A549 (cell line): ENCODE measurements at regions of chr14 and their contacts with region 1.

Region 1: DNA sequence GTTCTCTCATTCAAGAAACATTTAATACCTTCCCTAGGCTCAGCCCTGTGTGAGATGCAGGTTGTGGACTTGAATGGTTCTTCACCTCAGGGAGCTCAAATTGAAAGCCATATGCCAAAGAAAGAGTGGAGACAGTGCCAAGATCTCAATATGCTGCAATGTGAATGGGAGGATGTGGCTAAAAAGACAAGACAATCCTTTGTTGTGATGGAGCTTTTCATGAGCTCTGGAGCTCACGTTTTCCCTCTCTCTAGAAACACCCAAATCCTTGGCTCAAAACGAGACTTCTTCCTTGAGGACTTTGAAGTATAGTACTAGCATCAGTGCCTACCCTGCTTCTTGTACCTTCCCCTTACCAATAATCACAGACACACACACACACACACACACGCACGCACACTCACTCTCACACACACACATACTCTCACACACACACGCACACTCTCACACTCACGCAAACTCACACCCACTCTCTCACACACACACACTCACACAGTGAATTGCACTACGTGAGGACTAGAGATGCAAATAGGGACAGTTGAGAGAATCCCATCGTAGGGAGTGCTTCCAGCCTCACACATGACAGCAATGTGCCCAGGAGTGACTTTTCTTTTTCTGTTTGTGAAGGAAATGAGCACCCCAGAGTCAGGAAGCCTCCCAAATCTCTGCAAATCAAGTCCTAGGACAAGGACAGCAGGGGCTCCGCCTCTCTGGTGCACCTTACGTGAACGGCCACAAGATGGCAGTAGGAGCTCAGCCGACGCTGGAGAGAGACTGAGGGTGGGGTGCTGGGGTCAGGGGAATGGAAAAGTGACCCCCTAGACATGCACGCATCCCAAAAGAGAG is 231.4 kb downstream of the PCNX1 start:
- DNase-seq: peak; percentile 53 to 61
- ATAC-seq: peak; percentile 89 to 95
- H3K4me3 ChIP-seq: no peak overlapping the region
- H3K27ac ChIP-seq: no peak overlapping the region
- H3K4me1 ChIP-seq: peaks cover 7% of the 10 kb centered on the region; the same call in 2 of the 3 replicates
- CTCF ChIP-seq: peak; percentile 91
- EP300 ChIP-seq: no peak
- POLR2A ChIP-seq: no peak
- RAD21 ChIP-seq: peak; percentile 95

Region 2: DNA sequence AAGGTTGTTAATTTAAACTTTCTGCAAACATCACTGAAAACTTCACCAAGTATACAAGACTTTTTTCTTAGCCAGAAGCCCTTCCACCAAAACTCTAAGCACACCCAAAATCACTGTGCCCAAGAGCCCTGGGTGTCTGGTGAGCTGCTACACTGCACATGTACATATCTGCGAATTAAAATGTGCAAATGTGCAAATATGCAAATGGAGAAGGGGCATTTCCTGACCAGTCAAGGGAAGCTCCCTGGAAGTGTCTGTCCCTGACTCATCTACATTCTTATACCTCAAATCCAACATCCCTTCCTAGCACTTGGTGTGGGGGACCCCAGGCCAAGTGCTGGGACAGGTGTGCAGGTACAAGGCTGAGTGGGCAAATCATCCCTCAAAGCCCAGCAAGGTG is 107.7 kb before region 1 on chr14:
- CTCF ChIA-PET with region 1: no interaction called
- POLR2A ChIA-PET with region 1: no interaction called
- DNase-seq: no peak
- ATAC-seq: no peak
- H3K4me3 ChIP-seq: no peak overlapping the region
- H3K27ac ChIP-seq: no peak overlapping the region
- H3K4me1 ChIP-seq: no peaks in the 10 kb centered on the region
- CTCF ChIP-seq: no peak
- EP300 ChIP-seq: no peak
- POLR2A ChIP-seq: no peak
- RAD21 ChIP-seq: no peak

Region 3: DNA sequence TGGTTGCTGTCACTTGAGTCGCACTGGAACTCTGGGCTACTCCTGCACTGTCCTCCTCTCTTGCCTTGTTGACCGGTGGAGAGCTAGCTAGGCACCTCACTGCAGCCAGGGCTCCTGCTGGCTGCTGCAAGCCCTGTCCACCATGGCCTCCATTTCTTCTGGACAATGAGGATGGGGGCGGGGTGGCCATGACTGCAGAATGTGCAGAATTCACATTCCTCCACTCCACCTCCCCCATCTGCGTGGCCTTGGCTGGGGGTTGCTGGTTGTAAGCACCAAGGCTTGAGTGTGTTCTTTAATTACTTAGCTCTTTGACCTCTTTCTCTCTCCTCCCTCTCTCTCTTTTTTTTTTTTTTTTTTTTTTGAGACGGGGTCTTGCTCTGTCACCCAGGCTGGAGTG is 17.1 kb after region 1 on chr14:
- CTCF ChIA-PET with region 1: interaction called, 14 read pairs
- POLR2A ChIA-PET with region 1: no interaction called
- DNase-seq: no peak
- ATAC-seq: no peak; a peak in 1 of 6 replicates
- H3K4me3 ChIP-seq: no peak overlapping the region
- H3K27ac ChIP-seq: no peak overlapping the region
- H3K4me1 ChIP-seq: no peaks in the 10 kb centered on the region
- CTCF ChIP-seq: no peak
- EP300 ChIP-seq: no peak
- POLR2A ChIP-seq: no peak
- RAD21 ChIP-seq: no peak

Region 4: DNA sequence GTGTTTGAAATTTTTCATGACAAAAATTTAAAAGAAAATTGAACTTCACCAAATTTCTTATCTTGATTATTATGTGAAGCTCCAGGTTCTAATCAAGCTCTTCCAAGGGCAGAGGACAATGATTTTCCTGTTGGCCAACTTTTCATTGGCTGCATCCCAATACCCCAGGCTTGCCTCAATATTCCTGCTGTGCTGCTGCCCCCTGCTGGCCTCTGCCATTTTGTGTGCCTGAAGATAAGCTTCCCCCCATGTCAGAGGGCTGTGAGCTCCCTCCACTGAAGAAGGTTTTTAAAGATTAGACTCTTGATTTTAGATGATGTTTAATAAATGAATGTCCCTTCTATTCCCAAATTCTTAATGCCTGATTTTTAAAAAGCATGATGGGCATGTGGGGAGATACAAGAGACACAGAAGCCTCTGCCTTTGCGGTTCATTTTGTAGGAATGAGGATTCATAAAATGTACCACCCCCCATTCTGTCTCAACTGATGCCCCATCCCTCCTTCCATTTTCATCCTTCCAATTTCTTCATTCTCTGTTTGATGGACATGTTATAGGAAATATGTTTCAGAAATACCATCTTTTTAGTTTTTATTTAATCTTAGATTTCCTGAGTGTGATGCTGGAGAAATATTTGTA is 716.8 kb after region 1 on chr14:
- CTCF ChIA-PET with region 1: interaction called, 31 read pairs
- POLR2A ChIA-PET with region 1: no interaction called
- DNase-seq: peak; percentile 46 to 64
- ATAC-seq: peak; percentile 68 to 88; a peak in 5 of 6 replicates
- H3K4me3 ChIP-seq: no peak overlapping the region
- H3K27ac ChIP-seq: no peak overlapping the region
- H3K4me1 ChIP-seq: 0 out of 3 replicates have a peak, but pooled peaks cover 4% of the 10 kb centered on the region
- CTCF ChIP-seq: peak; percentile 57
- EP300 ChIP-seq: no peak
- POLR2A ChIP-seq: no peak
- RAD21 ChIP-seq: peak; percentile 71 to 79